Activated CD8-positive, alpha-beta T cell treated with anti-CD3 and anti-CD28 coated beads for 36 hours (primary cell): ENCODE measurements at regions of chr9 and their contacts with region 1.

Region 1: GRCh38 chr9:8802242-8802641 is 1002.7 kb upstream of the DMAC1 start:
- DNase-seq: no peak
- ATAC-seq: no peak
- H3K4me3 Mint-ChIP-seq: no peak overlapping the region
- H3K27ac Mint-ChIP-seq: no peak overlapping the region
- H3K4me1 Mint-ChIP-seq: no peaks in the 10 kb centered on the region
- H3K27me3 Mint-ChIP-seq: no peaks in the 10 kb centered on the region
- CTCF ChIP-seq: no peak

Region 2: GRCh38 chr9:8745347-8745746 is 56.9 kb before region 1 on chr9:
- CTCF ChIA-PET with region 1: no interaction called
- POLR2A ChIA-PET with region 1: no interaction called
- intact Hi-C with region 1: loop called (anchors 10 kb)
- DNase-seq: no peak
- ATAC-seq: no peak
- H3K4me3 Mint-ChIP-seq: no peak overlapping the region
- H3K27ac Mint-ChIP-seq: no peak overlapping the region
- H3K4me1 Mint-ChIP-seq: no peaks in the 10 kb centered on the region
- H3K27me3 Mint-ChIP-seq: no peaks in the 10 kb centered on the region
- CTCF ChIP-seq: no peak

Region 3: DNA sequence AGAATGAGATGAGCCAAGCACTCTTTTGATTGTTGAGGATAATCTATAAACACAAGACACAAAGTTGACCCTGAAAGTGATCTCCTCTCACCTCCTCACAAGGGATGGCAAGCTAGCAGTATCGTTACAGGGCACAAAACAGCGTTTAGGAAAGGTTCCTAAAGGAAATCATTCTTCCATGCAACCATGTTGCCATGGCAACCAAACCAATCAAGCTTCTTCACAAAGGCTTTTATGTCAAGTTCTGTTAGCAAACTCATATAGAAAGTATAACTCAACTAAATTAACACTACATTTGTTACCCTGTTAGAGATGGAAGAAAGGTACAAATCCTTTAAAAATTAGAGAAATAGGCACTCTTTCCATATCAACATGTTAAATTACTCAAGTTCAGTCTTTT is 14.1 kb after region 1 on chr9:
- CTCF ChIA-PET with region 1: no interaction called
- POLR2A ChIA-PET with region 1: no interaction called
- intact Hi-C with region 1: no loop called
- DNase-seq: no peak
- ATAC-seq: no peak
- H3K4me3 Mint-ChIP-seq: no peak overlapping the region
- H3K27ac Mint-ChIP-seq: no peak overlapping the region
- H3K4me1 Mint-ChIP-seq: no peaks in the 10 kb centered on the region
- H3K27me3 Mint-ChIP-seq: no peaks in the 10 kb centered on the region
- CTCF ChIP-seq: no peak

Region 4: DNA sequence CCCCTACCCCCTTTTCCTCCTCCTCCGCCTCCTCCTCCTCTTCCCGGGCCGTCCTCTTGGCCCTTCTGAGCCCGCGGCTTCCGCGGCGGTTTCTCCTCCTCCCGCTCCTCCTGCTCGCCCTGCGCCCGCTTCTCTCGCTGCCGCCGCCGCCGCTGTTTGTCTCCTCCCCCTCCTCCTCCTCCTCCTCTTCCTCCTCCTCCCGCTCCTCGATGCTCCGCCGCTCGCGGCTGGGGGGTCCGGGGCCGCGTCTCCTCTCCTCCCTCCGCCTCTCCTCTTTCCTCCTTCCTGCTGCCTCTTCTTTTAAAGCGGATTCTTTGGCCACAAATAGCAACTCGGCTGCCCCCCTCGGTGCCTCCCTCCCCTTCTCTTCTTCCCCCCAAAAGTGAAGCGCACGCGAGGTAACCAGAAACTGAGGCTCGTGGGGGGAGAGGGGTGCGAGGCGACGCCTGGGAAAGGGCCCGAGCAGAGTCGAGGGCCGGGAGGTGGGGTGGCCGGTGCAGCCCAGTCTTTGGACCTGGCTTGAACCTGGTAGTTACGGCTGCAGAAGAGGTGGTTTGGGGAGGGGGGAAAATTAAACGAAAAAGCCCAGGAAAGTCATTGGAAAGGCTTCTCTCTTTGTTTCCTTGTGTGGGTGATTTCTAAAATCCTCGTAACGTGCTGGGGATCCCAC is 55.8 kb after region 1 on chr9:
- CTCF ChIA-PET with region 1: no interaction called
- POLR2A ChIA-PET with region 1: no interaction called
- intact Hi-C with region 1: no loop called
- DNase-seq: peak; percentile 14
- ATAC-seq: peak; percentile 30
- H3K4me3 Mint-ChIP-seq: peak overlapping the region; percentile 37
- H3K27ac Mint-ChIP-seq: no peak overlapping the region
- H3K4me1 Mint-ChIP-seq: peaks cover 7% of the 10 kb centered on the region
- H3K27me3 Mint-ChIP-seq: peaks cover 38% of the 10 kb centered on the region
- CTCF ChIP-seq: no peak